Aorta (tissue), 5 donors: ENCODE measurements at regions of chr12 and their contacts with region 1.

Region 1: DNA sequence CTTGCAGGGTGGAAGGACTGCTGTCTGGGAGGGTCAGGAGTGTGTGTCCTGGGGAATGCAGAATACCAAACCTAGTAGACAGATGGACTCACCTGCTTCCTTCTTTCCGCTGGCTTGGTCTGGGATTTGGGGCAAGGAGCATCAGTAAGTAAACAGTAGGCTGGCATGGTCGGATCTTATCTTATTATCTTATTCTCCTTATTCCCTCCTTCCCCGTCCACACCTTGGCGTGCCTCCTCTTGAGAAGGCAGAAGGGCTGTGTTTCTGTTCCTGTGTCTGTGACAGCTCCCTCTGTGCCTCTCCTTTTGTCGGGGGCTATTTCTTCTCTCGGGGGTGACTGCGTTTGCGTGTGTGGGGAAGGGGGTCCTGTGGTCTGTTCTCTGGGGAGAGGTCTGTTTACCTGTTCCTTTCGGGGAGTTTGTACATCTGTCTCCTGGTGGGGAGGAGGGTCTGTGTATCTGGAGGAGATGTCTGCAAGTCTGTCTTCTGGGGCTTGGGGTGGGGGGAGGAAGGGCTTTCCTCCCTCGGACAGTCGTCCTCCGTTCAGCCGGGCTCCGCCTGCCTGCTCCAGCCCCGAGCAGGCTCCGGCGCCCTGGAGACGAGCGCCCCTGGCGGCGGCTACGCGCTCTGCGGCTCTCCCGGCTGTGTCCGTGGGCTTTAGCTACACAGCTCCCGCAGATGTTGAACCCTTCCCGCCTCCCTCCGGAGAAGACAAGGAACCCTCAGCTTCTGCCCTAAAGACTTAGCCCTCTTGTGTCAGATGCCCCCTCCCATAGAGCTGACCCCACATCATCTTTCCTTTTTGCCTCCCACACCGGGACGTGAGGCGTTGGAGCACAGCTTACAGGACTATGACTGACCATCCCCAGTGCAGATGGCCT is 4.3 kb downstream of the KRT86 start:
- DNase-seq: peak; percentile 84 to 95
- ATAC-seq: peak; percentile 92
- H3K4me3 ChIP-seq: no peak overlapping the region
- H3K27ac ChIP-seq: peak overlapping the region in 1 of 2 donors; percentile 93
- H3K4me1 ChIP-seq: peaks cover 5% of the 10 kb centered on the region in 2 donors
- H3K27me3 ChIP-seq: no peaks in the 10 kb centered on the region

Region 2: DNA sequence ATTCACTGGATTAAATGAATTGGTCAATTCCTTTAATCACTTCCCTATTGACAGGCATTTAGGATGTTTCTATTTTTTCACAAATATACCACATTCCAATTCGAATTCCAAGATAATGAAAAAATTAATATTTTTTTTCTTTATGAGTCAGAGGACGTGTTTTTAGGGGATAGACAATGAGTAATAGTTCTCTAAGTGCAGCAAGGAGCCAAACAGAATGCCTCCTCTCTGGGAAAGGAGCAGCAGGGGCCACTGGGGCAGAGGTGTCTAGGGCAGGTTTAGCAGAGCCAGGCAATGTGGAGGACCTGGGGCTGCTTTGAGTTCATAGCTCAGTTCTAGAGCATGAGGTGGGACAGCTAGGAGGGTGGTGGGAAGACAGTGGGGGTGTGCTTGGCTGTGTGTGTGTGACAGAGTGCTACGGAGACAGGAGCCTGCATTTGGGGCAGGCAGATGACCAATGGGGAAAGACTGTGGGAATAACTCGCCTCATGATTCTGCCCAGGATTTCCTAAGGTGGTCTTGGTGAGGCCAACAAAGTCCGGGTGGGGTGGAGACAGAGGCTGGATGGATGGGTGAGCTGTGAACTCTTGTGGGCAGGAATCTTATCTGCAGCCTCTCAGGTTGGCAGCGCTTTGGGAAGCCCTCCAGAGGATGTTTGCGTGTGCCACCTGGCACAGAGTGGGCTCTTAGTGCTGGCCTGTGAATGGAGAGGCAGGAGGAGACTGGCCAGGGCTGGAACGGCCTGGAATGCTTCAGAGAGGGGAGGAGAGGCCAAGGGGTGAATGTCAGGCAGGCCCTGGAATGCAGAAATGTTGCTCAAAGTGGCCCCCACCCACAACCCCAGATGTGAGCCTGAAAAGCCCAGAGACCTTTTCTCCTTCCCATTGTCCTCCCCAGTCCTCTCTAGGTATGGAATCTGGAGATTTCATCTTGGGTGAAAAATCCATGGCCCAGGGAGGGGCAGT is 48.2 kb before region 1 on chr12:
- intact Hi-C with region 1: loop called (anchors 5 kb)
- DNase-seq: peak in 1 of 2 donors; percentile 77
- ATAC-seq: peak; percentile 53
- H3K4me3 ChIP-seq: no peak overlapping the region
- H3K27ac ChIP-seq: peak overlapping the region in 1 of 2 donors; percentile 95
- H3K4me1 ChIP-seq: peaks cover 0 to 4% of the 10 kb centered on the region in 2 donors
- H3K27me3 ChIP-seq: no peaks in the 10 kb centered on the region

Region 3: GRCh38 chr12:52243856-52244614 is 34.7 kb before region 1 on chr12:
- intact Hi-C with region 1: loop called in 1 of 2 experiments (anchors 2 kb)
- DNase-seq: peak; percentile 95
- ATAC-seq: peak; percentile 81
- H3K4me3 ChIP-seq: no peak overlapping the region
- H3K27ac ChIP-seq: peak overlapping the region in 1 of 2 donors; percentile 87
- H3K4me1 ChIP-seq: no peaks in the 10 kb centered on the region
- H3K27me3 ChIP-seq: no peaks in the 10 kb centered on the region

Region 4: GRCh38 chr12:52258335-52258901 is 20.4 kb before region 1 on chr12:
- intact Hi-C with region 1: no loop called
- DNase-seq: peak in 1 of 2 donors; percentile 84
- ATAC-seq: peak; percentile 13
- H3K4me3 ChIP-seq: no peak overlapping the region
- H3K27ac ChIP-seq: no peak overlapping the region
- H3K4me1 ChIP-seq: no peaks in the 10 kb centered on the region
- H3K27me3 ChIP-seq: no peaks in the 10 kb centered on the region

Region 5: DNA sequence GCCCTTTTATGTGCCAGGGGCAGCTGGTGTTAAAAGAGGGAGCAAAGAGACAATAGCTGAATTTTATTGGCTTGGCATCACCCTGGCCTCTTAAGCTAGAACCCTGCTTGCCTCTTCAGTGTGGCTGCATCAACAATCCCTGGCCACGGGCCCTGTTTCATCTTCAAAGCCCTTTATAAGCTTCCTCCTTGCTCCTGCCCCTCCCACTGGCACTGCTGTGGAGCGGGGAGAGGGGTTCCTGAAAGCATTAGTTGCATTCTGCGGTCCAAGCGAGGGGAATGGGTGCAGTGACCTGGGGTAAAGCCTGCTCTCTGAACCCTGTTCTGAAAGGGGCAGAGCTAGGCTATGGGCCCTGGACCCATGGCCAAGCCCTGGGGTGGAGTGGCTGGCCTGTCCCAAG is 42.6 kb after region 1 on chr12:
- intact Hi-C with region 1: loop called in 1 of 2 experiments (anchors 5 kb)
- DNase-seq: peak in 1 of 2 donors; percentile 68
- ATAC-seq: no peak
- H3K4me3 ChIP-seq: no peak overlapping the region
- H3K27ac ChIP-seq: no peak overlapping the region
- H3K4me1 ChIP-seq: no peaks in the 10 kb centered on the region
- H3K27me3 ChIP-seq: no peaks in the 10 kb centered on the region